Activated B cell treated with CpG ODN at 0.5 μM for 24 hours (primary cell): ENCODE measurements at regions of chr3 and their contacts with region 1.

Region 1: GRCh38 chr3:125507128-125507527 is 12.9 kb downstream of the SNX4 start:
- DNase-seq: no peak
- ATAC-seq: no peak
- H3K4me3 Mint-ChIP-seq: no peak overlapping the region
- H3K27ac Mint-ChIP-seq: no peak overlapping the region
- H3K4me1 Mint-ChIP-seq: peaks cover 9% of the 10 kb centered on the region
- H3K27me3 Mint-ChIP-seq: no peaks in the 10 kb centered on the region
- CTCF ChIP-seq: no peak

Region 2: DNA sequence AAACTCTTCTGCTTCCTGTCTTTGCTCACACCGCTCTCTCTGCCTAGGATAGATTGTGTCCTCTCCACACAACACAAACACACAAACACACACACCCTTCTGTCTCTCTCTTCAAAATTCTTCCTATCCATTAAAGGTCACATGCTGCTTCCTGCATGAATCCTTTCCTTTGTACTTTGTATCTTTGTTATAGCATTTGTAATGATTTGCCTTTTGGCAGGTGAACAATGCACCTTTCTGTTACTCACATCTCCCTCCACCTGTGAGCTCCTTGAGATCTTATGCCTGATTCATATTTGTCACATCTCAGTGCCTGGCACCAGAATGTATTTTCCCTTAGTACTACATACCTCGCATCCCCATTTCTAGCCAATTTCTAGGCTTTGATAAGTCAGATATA is 1028.3 kb before region 1 on chr3:
- CTCF ChIA-PET with region 1: no interaction called
- POLR2A ChIA-PET with region 1: no interaction called
- intact Hi-C with region 1: no loop called
- DNase-seq: no peak
- ATAC-seq: no peak
- H3K4me3 Mint-ChIP-seq: no peak overlapping the region
- H3K27ac Mint-ChIP-seq: no peak overlapping the region
- H3K4me1 Mint-ChIP-seq: no peaks in the 10 kb centered on the region
- H3K27me3 Mint-ChIP-seq: peaks cover 13% of the 10 kb centered on the region
- CTCF ChIP-seq: no peak

Region 3: GRCh38 chr3:125480656-125481374 is 26.3 kb before region 1 on chr3:
- CTCF ChIA-PET with region 1: no interaction called
- POLR2A ChIA-PET with region 1: interaction called, 10 read pairs
- intact Hi-C with region 1: no loop called
- DNase-seq: no peak
- ATAC-seq: no peak
- H3K4me3 Mint-ChIP-seq: no peak overlapping the region
- H3K27ac Mint-ChIP-seq: no peak overlapping the region
- H3K4me1 Mint-ChIP-seq: no peaks in the 10 kb centered on the region
- H3K27me3 Mint-ChIP-seq: no peaks in the 10 kb centered on the region
- CTCF ChIP-seq: no peak

Region 4: GRCh38 chr3:125525153-125525552 is 18.0 kb after region 1 on chr3:
- CTCF ChIA-PET with region 1: no interaction called
- POLR2A ChIA-PET with region 1: no interaction called
- intact Hi-C with region 1: no loop called
- DNase-seq: no peak
- ATAC-seq: no peak
- H3K4me3 Mint-ChIP-seq: no peak overlapping the region
- H3K27ac Mint-ChIP-seq: no peak overlapping the region
- H3K4me1 Mint-ChIP-seq: peaks cover 3% of the 10 kb centered on the region
- H3K27me3 Mint-ChIP-seq: no peaks in the 10 kb centered on the region
- CTCF ChIP-seq: no peak

Region 5: DNA sequence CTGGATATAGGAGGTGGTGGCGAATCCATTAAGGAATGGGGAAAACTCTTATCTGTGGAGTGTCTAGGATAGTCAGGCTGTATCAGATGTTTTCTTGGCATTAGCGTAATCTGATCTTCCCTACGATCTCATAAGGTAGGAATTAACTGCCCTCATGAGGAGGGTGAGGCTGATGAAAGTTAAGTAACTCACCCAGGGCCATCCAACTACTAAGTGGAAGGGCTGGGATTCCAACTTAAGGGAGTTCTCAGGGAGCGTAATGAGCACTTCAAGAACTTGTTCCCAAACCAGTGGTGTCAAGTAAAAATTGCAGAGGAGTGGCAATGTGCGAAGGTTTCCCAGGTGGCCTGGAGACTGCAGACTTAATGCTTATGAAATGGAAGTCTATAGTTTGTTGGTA is 144.1 kb after region 1 on chr3:
- CTCF ChIA-PET with region 1: no interaction called
- POLR2A ChIA-PET with region 1: no interaction called
- intact Hi-C with region 1: no loop called
- DNase-seq: no peak
- ATAC-seq: no peak
- H3K4me3 Mint-ChIP-seq: no peak overlapping the region
- H3K27ac Mint-ChIP-seq: no peak overlapping the region
- H3K4me1 Mint-ChIP-seq: no peaks in the 10 kb centered on the region
- H3K27me3 Mint-ChIP-seq: no peaks in the 10 kb centered on the region
- CTCF ChIP-seq: no peak